ENCODE measurements at regions of chr2 and their contacts with region 1.

Region 1: GRCh38 chr2:176814306-176815052 is 398.1 kb upstream of the HNRNPA3 start:
- DNase-seq: peak; percentile 19
- H3K4me3 Mint-ChIP-seq: no peak overlapping the region
- H3K27ac Mint-ChIP-seq: no peak overlapping the region
- H3K4me1 Mint-ChIP-seq: peaks cover 12% of the 10 kb centered on the region
- H3K27me3 Mint-ChIP-seq: no peaks in the 10 kb centered on the region

Region 2: GRCh38 chr2:176269319-176270099 is 545.0 kb before region 1 on chr2 and contains the start of gene MTX2:
- CTCF ChIA-PET with region 1: no interaction called
- intact Hi-C with region 1: loop called (anchors 10 kb)
- DNase-seq: peak; percentile 76
- H3K4me3 Mint-ChIP-seq: peak within 1 kb of the TSS; percentile 97
- H3K27ac Mint-ChIP-seq: peak within 1 kb of the TSS; percentile 88
- H3K4me1 Mint-ChIP-seq: peaks cover 20% of the 10 kb centered on the region
- H3K27me3 Mint-ChIP-seq: no peaks in the 10 kb centered on the region
- total RNA-seq, gene MTX2: 24.3 to 28.1 TPM

Region 3: DNA sequence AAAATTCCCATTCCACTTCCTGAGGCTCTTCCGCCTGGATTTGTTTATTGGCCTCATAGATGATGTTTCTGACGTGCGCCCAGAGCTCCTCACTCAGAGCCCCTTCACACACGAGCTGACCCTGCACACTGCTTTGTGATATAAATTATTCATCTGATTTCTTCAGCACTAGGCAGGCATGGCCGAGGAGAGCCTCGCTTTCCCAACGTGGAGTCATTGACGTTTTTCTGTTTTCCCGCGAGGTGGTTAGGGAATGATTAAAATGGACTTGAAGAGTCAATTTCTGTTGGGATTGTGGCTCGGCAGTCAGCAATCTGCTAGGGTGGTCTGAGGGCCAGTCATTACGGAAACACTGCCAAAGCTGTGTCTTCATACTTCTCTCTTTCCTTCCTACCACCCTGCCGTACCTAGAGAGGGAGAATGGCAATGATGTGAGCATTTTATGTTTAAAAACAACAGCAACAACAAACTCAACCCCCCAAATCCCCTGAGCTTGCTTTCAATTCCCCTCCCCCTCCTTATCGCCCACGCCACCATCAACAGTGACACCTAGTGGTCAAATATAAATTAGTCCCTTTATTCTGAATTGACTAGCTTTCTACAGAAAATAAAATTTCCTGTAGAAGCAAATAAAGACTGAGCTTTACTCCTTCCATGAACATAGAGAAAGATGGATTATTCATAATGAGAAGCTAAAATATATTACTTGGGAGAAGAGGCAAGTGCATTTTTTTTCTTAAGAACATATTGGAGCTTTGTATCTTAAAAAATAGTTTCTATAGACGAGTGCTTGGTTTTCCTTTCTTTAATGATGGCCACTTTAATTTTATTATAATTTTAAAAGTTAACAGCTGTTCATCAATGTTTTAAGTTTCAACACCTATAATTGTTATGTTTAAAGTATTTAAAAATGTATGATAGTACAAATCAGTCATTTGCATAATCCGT is 260.1 kb before region 1 on chr2:
- CTCF ChIA-PET with region 1: interaction called, 3 read pairs
- intact Hi-C with region 1: loop called (anchors 5 kb)
- DNase-seq: peak; percentile 45
- H3K4me3 Mint-ChIP-seq: peak overlapping the region; percentile 72
- H3K27ac Mint-ChIP-seq: no peak overlapping the region
- H3K4me1 Mint-ChIP-seq: peaks cover 12% of the 10 kb centered on the region
- H3K27me3 Mint-ChIP-seq: peaks cover 39% of the 10 kb centered on the region

Region 4: DNA sequence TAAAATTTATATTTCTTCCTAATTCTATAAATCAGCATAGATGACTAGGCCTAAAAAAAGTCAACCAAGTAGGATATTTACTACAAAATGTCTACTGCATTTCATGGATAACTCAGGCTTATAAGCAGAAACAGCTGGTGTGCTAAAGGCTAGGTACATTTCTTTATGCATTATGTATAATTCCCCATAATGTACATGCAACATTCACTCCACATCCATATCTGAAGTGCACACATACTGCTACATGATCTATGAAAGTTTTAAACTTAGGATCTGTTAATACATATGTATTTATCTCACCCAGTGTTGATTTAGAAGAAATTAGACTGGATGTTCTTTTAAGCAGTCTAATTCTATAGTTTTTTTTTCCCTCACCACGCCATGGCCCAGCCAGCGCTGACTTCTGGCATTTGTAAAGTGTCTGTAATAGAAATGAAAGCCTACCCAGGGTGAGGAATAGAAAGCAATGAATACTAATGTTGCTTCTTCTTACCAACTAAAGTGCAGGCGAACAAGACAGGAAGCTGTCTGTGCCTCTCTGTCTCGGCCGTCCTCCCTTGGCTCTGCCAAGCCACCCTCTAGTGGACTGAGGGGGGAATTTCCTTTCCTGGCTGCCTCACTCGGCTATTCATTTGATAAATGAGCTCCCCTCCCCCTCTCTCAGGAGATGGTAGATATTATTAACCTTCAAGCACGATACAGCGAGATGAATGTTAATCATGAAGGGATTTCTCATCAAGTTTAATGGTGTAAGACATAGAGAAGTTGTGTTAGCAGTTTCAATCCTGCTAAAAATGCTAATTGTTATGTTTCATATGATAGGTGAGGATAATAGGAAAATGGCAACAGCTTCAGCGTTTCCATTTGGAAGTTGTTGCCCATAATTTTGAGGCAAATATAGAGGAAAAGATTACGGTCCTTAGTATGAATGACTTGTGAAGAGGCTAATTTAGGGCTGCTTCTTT is 160.7 kb before region 1 on chr2:
- CTCF ChIA-PET with region 1: interaction called, 9 read pairs
- intact Hi-C with region 1: loop called (anchors 1 kb)
- DNase-seq: peak; percentile 59
- H3K4me3 Mint-ChIP-seq: no peak overlapping the region
- H3K27ac Mint-ChIP-seq: no peak overlapping the region
- H3K4me1 Mint-ChIP-seq: peaks cover 4% of the 10 kb centered on the region
- H3K27me3 Mint-ChIP-seq: peaks cover 32% of the 10 kb centered on the region

Region 5: DNA sequence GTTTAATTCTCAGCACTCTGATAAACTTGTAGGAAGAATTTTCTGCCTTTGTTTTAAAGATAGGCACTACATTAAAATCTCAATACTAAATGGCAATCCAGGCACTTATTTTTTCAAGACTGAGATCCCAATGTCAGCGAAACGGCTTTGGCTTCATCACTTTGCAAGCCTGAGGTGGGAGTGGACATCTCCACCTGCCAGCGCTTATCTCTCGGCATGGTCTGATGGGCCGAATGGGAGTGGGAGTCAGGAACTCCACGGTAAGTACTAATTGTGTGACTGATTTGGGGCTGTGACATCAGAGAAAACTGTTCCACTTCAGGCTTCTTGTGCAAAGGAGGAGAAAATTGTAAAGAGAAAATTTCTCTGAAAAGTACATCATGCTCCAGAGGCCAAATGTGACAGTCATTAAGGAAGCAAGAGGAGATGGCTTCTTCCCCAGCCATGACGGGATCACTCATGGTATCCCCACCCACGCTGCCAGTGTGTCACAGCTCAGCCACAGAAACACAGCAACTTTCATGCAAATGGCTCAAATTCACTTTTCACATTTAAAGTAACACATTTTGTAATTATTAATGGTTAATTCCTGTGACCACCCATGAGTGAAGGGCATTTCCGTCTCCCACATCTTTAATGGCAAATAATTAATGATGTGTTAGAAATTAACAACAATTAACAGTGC is 12.6 kb after region 1 on chr2:
- CTCF ChIA-PET with region 1: interaction called, 9 read pairs
- intact Hi-C with region 1: loop called (anchors 1 kb)
- DNase-seq: peak; percentile 61
- H3K4me3 Mint-ChIP-seq: no peak overlapping the region
- H3K27ac Mint-ChIP-seq: peak overlapping the region; percentile 74
- H3K4me1 Mint-ChIP-seq: peaks cover 39% of the 10 kb centered on the region
- H3K27me3 Mint-ChIP-seq: no peaks in the 10 kb centered on the region